Esophagus muscularis mucosa (tissue), 4 donors: ENCODE measurements at regions of chr14 and their contacts with region 1.

Region 1: GRCh38 chr14:51780006-51780692 is 80.3 kb upstream of the GNG2 start:
- DNase-seq: peak; percentile 94
- H3K4me3 ChIP-seq: peak overlapping the region in 3 of 4 donors; percentile 8 to 33 (median 17)
- H3K27ac ChIP-seq: no peak overlapping the region
- H3K4me1 ChIP-seq: peaks cover 6 to 14% (median 11%) of the 10 kb centered on the region in 4 donors
- H3K27me3 ChIP-seq: no peaks in the 10 kb centered on the region
- CTCF ChIP-seq: peak; percentile 85 to 90 (median 87)
- EP300 ChIP-seq: no peak
- POLR2A ChIP-seq: no peak

Region 2: DNA sequence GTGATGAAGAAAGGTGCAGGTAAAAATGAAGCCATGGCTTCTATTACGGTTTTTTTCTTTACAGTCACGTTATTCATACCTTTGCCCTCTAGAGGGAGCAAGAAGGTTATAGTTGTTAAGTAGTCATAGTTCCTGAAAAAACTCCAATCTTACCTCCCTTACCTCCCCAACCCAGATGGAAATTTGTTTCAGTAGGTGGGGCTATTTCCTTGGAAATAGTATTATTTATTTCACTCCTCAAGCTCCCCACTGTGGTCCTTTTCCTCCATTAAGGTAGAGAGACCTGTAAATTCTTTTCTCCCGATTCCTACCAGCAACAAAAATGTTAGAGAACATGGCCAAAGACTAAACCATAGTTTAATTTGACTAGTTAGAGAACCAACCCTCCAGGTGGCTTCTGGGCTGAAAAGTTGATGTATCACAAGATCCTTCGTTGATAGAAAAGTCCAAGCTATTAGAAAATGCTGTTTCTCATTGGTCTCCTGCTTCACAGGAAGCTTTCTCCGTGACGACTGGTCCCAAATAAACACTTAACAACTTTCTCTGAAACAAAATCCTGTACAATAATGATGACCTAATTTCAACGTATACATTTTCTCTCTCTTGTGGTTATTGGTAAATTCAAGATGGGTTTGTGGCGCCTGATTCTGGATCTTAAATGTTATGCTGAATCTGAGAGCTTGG is 496.6 kb before region 1 on chr14:
- intact Hi-C with region 1: loop called (anchors 1 kb)
- DNase-seq: no peak
- H3K4me3 ChIP-seq: no peak overlapping the region
- H3K27ac ChIP-seq: no peak overlapping the region
- H3K4me1 ChIP-seq: peaks cover 0 to 9% (median 0%) of the 10 kb centered on the region in 4 donors
- H3K27me3 ChIP-seq: no peaks in the 10 kb centered on the region
- CTCF ChIP-seq: peak; percentile 77 to 91 (median 91)
- EP300 ChIP-seq: no peak
- POLR2A ChIP-seq: no peak

Region 3: GRCh38 chr14:51979088-51979709 is 199.1 kb after region 1 on chr14:
- intact Hi-C with region 1: loop called (anchors 5 kb)
- DNase-seq: peak; percentile 96
- H3K4me3 ChIP-seq: no peak overlapping the region
- H3K27ac ChIP-seq: peak overlapping the region in 1 of 4 donors; percentile 39
- H3K4me1 ChIP-seq: peaks cover 0 to 13% (median 7%) of the 10 kb centered on the region in 4 donors
- H3K27me3 ChIP-seq: no peaks in the 10 kb centered on the region
- CTCF ChIP-seq: peak in 2 of 3 experiments; percentile 84 to 91
- EP300 ChIP-seq: no peak
- POLR2A ChIP-seq: no peak